Right cardiac atrium (tissue), 5 donors: ENCODE measurements at regions of chr12 and their contacts with region 1.

Region 1: DNA sequence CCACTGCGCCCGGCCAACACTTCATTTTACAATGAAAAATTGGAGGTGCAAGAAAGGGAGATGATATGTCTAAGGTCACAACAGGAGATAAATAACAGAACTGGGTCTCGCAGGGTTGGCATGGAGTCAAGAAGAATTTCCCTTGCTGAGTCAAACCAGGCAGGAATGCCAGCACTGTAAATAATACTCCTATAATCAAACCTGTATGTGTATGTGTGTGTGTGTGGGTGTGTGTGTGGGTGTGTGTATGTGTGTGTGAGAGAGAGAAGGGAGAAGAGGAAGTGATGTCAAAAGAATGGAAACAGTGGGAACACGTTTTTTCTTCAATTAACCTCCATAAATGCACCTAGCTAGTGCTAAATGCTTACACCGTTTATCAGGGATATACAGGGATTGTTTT is 70.4 kb downstream of the TMEM116 start:
- DNase-seq: no peak
- ATAC-seq: no peak
- H3K4me3 ChIP-seq: no peak overlapping the region
- H3K27ac ChIP-seq: no peak overlapping the region
- H3K4me1 ChIP-seq: no peaks in the 10 kb centered on the region
- H3K27me3 ChIP-seq: no peaks in the 10 kb centered on the region

Region 2: DNA sequence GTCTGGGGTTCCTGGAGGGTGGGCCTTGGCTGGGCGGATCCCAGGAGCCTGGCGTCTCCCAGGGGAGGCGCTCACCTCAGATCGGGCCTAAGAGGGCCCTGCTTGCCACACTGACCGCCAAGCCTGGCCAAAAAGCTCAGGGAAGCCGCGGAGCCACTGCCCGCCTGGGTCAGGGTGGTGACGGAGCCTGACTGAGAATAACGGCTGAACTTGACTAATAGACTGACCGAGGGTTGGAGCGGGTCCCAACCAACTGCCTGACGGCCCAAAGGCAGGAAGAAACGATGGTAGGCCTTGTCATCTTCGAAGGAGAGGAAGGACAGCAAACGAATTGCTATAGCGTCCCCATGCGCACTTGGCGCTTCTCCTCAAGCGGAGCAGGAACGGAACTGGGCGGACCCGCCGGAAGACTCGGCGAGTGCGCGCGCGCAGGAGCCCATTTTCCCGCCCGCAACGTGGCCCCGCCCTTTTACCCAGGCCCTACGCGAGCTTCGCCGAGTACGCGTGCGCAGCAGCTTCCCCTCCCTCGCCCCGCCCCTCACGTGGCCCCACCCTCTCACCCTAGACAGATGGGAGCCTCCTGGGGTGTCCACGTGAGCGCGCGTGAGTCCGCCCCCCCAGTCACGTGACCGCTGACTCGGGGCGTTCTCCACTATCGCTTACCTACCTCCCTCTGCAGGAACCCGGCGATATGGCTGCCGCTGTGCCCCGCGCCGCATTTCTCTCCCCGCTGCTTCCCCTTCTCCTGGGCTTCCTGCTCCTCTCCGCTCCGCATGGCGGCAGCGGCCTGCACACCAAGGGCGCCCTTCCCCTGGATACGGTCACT is 70.4 kb after region 1 on chr12 and contains the starts of genes ERP29 and TMEM116:
- intact Hi-C with region 1: loop called in 2 of 4 experiments (anchors 10 kb)
- DNase-seq: peak; percentile 99 to 100 (median 100)
- ATAC-seq: peak; percentile 96
- H3K4me3 ChIP-seq: peak within 1 kb of the TSS; percentile 69
- H3K27ac ChIP-seq: peak within 1 kb of the TSS; percentile 95
- H3K4me1 ChIP-seq: peaks cover 10% of the 10 kb centered on the region
- H3K27me3 ChIP-seq: no peaks in the 10 kb centered on the region
- total RNA-seq, gene ERP29: 39.0 to 58.3 (median 55.5) TPM
- total RNA-seq, gene TMEM116: 12.2 to 24.1 (median 17.6) TPM

Region 3: GRCh38 chr12:112096667-112097066 is 154.1 kb after region 1 on chr12:
- intact Hi-C with region 1: loop called in 1 of 4 experiments (anchors 10 kb)
- DNase-seq: no peak
- ATAC-seq: peak in 1 of 2 donors; percentile 20
- H3K4me3 ChIP-seq: no peak overlapping the region
- H3K27ac ChIP-seq: no peak overlapping the region
- H3K4me1 ChIP-seq: no peaks in the 10 kb centered on the region
- H3K27me3 ChIP-seq: no peaks in the 10 kb centered on the region